Left ventricle myocardium superior (tissue), 1 donor: ENCODE measurements at regions of chr5 and their contacts with region 1.

Region 1: GRCh38 chr5:56717253-56717987 is 97.9 kb upstream of the MAP3K1 start:
- DNase-seq: no peak
- ATAC-seq: no peak

Region 2: GRCh38 chr5:56649569-56649968 is 67.9 kb before region 1 on chr5:
- intact Hi-C with region 1: loop called (anchors 2 kb)
- DNase-seq: peak; percentile 45
- ATAC-seq: peak; percentile 80

Region 3: GRCh38 chr5:56757071-56757470 is 39.7 kb after region 1 on chr5:
- intact Hi-C with region 1: no loop called
- DNase-seq: no peak
- ATAC-seq: no peak